Activated CD8-positive, alpha-beta T cell treated with anti-CD3 and anti-CD28 coated beads, Interleukin-2, amount 10 ng/mL, durations not matched to agents 7 days and 5 days (primary cell): ENCODE measurements at regions of chr7 and their contacts with region 1.

Region 1: DNA sequence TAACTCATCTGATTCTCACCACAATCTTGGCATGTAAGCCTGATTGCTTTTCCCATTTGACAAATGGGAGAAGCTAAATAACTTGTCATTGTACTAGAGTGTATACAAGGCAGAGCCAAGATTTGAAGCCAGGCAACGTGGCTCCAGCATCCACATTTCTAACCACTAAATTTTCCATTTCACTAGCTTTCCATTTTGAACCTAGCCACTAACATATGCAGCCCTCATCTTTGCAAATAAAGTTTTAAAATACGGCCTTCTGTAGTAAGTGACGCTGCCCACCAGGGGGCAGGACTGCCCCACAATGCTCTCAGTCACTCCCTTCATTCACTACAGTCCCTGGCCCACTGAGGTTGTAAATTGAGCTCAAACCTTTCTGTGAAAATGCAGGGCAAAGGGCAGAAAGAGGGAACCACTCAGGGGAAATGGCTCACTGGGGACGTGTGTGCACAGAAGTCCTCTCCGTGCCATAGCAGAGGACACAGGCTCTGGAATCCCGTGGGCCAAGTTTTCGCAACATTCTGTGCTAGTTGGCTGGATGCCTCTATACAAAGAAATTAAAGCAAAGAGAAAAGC is 315.7 kb downstream of the TNS3 start:
- DNase-seq: peak; percentile 50
- ATAC-seq: peak; percentile 51
- H3K4me3 Mint-ChIP-seq: no peak overlapping the region
- H3K27ac Mint-ChIP-seq: no peak overlapping the region
- H3K4me1 Mint-ChIP-seq: no peaks in the 10 kb centered on the region
- H3K27me3 Mint-ChIP-seq: no peaks in the 10 kb centered on the region

Region 2: DNA sequence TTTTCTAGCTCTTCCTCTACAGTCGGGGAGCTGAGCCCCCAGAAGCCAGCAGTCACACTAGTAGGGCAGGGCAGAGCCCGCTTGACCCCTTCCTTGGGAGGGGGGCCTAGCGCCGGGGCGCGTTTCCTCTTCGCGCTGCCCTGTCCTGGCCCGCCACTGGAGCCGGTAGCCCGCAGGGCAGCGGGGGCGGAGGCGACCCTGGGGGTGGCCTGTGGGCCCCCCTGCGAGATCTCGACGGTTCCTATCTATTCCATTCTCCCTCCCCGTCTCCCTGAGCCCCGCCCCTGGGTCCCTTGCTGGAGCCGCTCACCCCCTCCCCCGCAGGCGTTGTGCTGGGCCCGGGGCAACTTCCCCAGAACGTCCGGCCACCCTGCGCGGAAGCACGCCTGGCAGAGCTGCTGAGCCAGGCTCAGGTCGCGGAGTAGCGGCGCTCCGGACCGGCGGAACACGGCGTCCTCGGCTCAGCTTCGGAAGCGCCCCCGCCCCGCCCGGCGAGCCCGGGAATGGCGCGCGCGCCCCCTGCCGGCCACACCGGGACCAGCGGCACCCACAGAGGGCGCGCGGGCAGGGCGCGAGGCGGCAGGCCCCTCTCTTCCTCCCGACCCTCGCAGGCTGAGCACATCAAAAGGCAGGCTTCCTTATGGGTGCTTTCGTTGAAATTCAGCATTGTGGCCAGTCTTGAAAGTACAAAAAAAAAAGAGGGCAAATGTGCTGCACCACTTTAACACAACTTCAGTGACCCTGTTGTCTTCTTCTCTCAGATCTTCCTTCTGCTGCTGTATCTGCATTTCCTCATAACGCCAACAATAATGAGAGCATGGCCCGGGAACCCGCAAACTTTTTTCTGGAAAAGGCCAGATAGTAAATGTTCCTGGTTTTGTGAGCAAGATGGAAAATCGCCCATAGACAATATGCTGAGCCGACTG is 11.9 kb before region 1 on chr7:
- CTCF ChIA-PET with region 1: interaction called, 12 read pairs
- POLR2A ChIA-PET with region 1: no interaction called
- DNase-seq: peak; percentile 55
- ATAC-seq: peak; percentile 92
- H3K4me3 Mint-ChIP-seq: peak overlapping the region; percentile 22
- H3K27ac Mint-ChIP-seq: no peak overlapping the region
- H3K4me1 Mint-ChIP-seq: peaks cover 4% of the 10 kb centered on the region
- H3K27me3 Mint-ChIP-seq: peaks cover 19% of the 10 kb centered on the region

Region 3: DNA sequence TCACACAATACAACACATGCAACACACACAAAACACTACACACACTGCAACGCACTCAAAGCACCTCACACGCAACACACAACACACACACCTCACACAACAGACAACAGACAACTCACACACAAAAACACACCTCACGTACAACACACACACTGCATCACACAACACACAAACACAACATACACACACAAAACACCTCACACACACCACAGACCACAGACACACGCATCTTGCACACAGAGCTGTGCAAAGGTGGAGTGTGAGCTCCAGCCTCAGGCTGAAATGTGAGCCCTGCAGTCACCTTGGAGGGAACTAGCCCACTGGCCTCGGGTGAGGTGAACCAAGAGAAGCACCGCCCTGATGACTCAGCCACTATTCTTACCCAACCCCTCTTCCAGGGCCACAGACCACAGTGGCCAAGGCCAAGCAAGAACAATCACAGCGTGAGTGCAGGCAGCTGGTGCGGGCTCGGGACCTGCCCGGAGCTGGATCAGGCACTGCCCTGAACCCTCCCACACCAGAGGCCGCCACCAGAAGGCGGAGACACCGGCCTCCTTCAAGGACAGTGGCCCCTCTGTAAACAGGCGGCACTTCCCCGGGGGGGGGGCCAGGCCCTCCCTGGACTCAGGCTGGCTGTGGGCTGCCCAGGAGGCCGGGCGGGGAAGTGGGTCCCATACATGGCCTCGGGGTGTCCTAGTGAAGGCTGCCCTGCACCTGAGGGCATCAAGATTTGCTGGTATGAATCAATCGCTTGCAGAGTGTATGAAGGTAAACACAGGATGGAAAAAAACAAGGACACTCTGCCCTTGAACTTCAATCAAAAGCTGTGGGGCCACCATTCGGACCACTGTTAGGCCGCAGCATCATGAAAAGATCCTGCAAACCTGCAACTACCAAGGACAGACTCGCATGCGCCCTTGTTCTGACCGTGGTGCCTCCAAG is 209.0 kb after region 1 on chr7:
- CTCF ChIA-PET with region 1: no interaction called
- POLR2A ChIA-PET with region 1: no interaction called
- DNase-seq: peak; percentile 33
- ATAC-seq: peak; percentile 62
- H3K4me3 Mint-ChIP-seq: no peak overlapping the region
- H3K27ac Mint-ChIP-seq: no peak overlapping the region
- H3K4me1 Mint-ChIP-seq: no peaks in the 10 kb centered on the region
- H3K27me3 Mint-ChIP-seq: no peaks in the 10 kb centered on the region

Region 4: DNA sequence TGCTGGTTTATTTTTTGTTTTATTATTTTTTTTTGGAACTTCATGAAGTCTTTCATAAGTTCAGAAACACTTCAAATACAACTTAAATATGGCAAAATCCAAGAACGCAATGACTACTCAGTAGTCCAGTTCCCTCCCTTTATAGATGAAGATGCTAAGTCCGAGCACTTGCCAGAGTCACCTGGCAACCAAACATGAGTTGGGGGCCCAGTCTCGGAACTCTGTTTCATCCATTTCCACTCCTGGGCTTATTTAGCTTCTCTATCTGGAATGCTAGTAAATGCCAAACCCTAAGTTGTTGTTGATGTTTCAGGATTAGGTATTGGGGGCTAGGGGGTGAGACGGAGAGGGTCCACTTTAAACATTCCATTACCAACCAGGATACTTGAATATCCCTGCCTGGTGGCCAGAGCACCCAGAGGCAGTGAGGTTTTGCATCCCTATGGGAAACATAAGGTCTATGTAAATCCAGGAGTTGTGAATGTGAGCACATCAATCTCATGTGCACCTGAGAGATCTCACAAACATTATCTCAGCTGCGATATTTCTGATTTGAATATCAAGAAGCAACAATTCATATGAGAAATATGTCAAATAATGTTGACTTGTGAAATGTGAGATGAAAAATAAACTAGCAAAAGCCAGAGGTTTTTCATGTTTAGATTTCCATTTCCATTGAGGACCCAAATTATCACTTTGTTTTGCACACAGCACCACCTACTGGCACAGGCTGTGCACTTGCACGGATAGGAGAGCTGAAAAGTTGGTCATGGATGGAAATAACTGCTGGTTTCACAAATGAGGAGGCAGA is 552.8 kb after region 1 on chr7:
- CTCF ChIA-PET with region 1: interaction called, 17 read pairs
- POLR2A ChIA-PET with region 1: no interaction called
- DNase-seq: peak; percentile 60
- ATAC-seq: no peak
- H3K4me3 Mint-ChIP-seq: no peak overlapping the region
- H3K27ac Mint-ChIP-seq: no peak overlapping the region
- H3K4me1 Mint-ChIP-seq: no peaks in the 10 kb centered on the region
- H3K27me3 Mint-ChIP-seq: peaks cover 4% of the 10 kb centered on the region